ENCODE measurements at regions of chr17 and their contacts with region 1.

Region 1: GRCh38 chr17:15157051-15157450 is 108.1 kb downstream of the PMP22 start:
- DNase-seq: no peak
- ATAC-seq: no peak
- H3K4me3 ChIP-seq: no peak overlapping the region
- H3K27ac ChIP-seq: no peak overlapping the region
- H3K4me1 ChIP-seq: no peaks in the 10 kb centered on the region
- H3K27me3 ChIP-seq: no peaks in the 10 kb centered on the region

Region 2: DNA sequence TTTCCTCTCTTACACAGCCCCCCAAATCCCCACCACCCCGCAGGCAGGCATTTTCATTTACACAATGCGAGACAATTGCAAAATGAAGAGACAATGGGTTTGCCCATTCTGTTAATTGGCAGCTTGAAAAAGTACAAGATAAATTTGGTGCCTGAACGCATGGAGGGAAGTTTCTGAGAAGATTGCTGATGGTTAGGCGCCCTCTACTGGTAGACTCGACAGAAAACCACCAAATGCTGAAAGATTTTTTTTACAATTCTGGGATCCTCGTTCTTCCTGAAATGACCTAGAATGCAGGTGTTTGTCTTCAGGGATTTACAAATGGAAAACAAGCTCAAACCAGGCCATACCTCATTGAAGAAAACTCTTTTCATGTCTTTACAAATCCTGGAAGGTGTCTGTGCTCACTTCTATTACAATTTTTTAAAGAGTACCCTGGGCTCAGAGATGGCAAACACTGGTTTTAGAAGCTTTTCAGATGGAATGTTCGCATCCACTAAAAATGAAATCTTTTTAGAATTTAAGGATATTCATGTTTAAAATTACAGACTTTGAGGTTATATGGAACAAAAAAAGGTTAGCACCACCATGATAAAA is 230.4 kb before region 1 on chr17:
- intact Hi-C with region 1: loop called in 1 of 4 experiments (anchors 10 kb)
- DNase-seq: peak in 1 of 3 donors; percentile 13
- ATAC-seq: no peak
- H3K4me3 ChIP-seq: no peak overlapping the region
- H3K27ac ChIP-seq: no peak overlapping the region
- H3K4me1 ChIP-seq: no peaks in the 10 kb centered on the region
- H3K27me3 ChIP-seq: no peaks in the 10 kb centered on the region

Region 3: GRCh38 chr17:14935139-14935841 is 221.8 kb before region 1 on chr17:
- intact Hi-C with region 1: loop called in 1 of 4 experiments (anchors 5 kb)
- DNase-seq: no peak
- ATAC-seq: no peak
- H3K4me3 ChIP-seq: no peak overlapping the region
- H3K27ac ChIP-seq: no peak overlapping the region
- H3K4me1 ChIP-seq: no peaks in the 10 kb centered on the region
- H3K27me3 ChIP-seq: no peaks in the 10 kb centered on the region

Region 4: GRCh38 chr17:14946481-14946880 is 210.6 kb before region 1 on chr17:
- intact Hi-C with region 1: no loop called
- DNase-seq: no peak
- ATAC-seq: no peak
- H3K4me3 ChIP-seq: no peak overlapping the region
- H3K27ac ChIP-seq: no peak overlapping the region
- H3K4me1 ChIP-seq: no peaks in the 10 kb centered on the region
- H3K27me3 ChIP-seq: no peaks in the 10 kb centered on the region

Region 5: DNA sequence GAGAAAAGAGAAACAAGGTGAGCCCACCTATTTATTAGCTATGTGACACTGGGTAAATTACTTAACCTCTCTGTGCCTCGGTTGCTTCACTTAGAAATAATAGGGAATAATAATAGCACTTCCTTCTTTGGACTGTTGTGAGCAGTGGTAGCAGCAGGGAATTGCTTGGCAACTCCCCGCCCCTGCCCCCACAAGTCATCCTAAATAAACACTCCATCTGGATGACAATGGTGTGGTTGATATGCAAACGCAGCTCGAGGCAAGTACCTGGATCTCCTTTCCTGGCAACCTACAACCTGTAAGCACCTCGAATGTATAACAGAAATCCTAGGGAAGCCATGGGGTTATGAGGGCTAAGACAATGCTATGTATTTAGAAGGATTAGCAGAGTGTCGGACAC is 175.3 kb after region 1 on chr17:
- intact Hi-C with region 1: no loop called
- DNase-seq: no peak
- ATAC-seq: no peak
- H3K4me3 ChIP-seq: no peak overlapping the region
- H3K27ac ChIP-seq: no peak overlapping the region
- H3K4me1 ChIP-seq: no peaks in the 10 kb centered on the region
- H3K27me3 ChIP-seq: no peaks in the 10 kb centered on the region

Measured in right cardiac atrium (tissue), 5 donors.